B cell (primary cell): ENCODE measurements at regions of chr2 and their contacts with region 1.

Region 1: DNA sequence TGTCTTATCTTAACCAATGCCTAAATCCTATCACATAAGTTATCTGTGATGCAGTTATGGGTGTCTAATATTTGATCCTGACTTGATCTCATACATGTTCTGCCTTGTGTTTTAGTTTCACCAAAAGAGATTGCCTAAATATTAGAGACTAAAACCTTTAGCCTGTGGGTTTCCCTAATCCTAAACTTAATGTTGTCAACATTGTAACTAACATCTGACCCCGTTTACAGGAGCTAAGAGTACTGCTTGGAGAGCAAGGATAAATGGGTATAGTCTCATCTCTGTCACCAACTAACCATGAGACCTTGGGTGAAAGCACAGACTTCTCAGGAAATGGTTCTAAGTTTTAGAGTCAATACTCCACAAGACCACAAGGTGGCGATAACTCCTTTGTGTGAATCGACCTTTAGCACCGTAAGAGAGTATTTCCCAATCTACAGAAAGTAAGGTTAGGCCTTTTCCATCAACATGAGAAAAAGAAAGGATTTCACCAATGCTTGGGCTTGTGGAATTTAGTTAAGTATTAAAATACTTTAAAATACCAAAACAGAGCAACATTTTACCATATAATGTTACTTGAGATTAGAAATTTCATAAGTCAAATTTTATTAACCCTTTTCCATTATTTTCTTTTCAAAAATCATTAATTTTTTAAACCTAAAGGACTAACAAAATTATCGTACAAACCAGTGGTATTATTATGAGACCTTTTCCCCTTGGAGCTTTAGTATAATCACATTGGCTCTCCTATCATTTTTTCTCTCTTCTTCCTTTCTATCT is 60.5 kb downstream of the G6PC2 start:
- DNase-seq: peak; percentile 71
- ATAC-seq: peak; percentile 73
- H3K4me3 ChIP-seq: no peak overlapping the region
- H3K4me3 Mint-ChIP-seq: no peak overlapping the region
- H3K27ac ChIP-seq: no peak overlapping the region
- H3K27ac Mint-ChIP-seq: no peak overlapping the region
- H3K4me1 ChIP-seq: no peaks in the 10 kb centered on the region
- H3K4me1 Mint-ChIP-seq: no peaks in the 10 kb centered on the region
- H3K27me3 ChIP-seq: no peaks in the 10 kb centered on the region
- H3K27me3 Mint-ChIP-seq: no peaks in the 10 kb centered on the region
- CTCF ChIP-seq: peak; percentile 95

Region 2: DNA sequence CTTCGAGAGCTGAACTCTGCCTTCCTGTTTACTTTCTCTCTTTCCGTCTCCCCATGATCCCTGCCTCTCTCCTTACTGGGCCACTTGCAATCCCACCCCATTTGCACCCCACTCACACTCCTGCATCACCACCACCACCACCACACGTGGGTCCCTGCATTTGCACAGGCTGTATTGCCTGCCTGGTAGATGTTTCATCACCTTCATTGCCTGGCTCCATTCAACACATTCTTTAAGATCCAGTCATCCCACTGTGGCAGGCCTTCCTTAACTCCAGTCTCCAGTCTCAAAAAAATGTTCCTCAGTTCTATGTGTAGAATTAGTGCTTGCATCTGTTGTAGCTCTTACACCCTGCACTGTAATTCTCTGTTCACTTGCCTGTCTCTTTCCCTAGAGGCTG is 145.3 kb before region 1 on chr2:
- CTCF ChIA-PET with region 1: no interaction called
- POLR2A ChIA-PET with region 1: no interaction called
- intact Hi-C with region 1: no loop called
- DNase-seq: no peak
- ATAC-seq: no peak
- H3K4me3 ChIP-seq: no peak overlapping the region
- H3K4me3 Mint-ChIP-seq: no peak overlapping the region
- H3K27ac ChIP-seq: no peak overlapping the region
- H3K27ac Mint-ChIP-seq: no peak overlapping the region
- H3K4me1 ChIP-seq: no peaks in the 10 kb centered on the region
- H3K4me1 Mint-ChIP-seq: no peaks in the 10 kb centered on the region
- H3K27me3 ChIP-seq: no peaks in the 10 kb centered on the region
- H3K27me3 Mint-ChIP-seq: no peaks in the 10 kb centered on the region
- CTCF ChIP-seq: no peak

Region 3: GRCh38 chr2:169080250-169081069 is 118.8 kb after region 1 on chr2:
- CTCF ChIA-PET with region 1: no interaction called
- POLR2A ChIA-PET with region 1: no interaction called
- intact Hi-C with region 1: no loop called
- DNase-seq: peak; percentile 55
- ATAC-seq: peak; percentile 92
- H3K4me3 ChIP-seq: no peak overlapping the region
- H3K4me3 Mint-ChIP-seq: no peak overlapping the region
- H3K27ac ChIP-seq: no peak overlapping the region
- H3K27ac Mint-ChIP-seq: peak overlapping the region; percentile 23
- H3K4me1 ChIP-seq: peaks cover 25 to 33% of the 10 kb centered on the region in 2 donors
- H3K4me1 Mint-ChIP-seq: peaks cover 40% of the 10 kb centered on the region
- H3K27me3 ChIP-seq: no peaks in the 10 kb centered on the region
- H3K27me3 Mint-ChIP-seq: no peaks in the 10 kb centered on the region
- CTCF ChIP-seq: no peak

Region 4: DNA sequence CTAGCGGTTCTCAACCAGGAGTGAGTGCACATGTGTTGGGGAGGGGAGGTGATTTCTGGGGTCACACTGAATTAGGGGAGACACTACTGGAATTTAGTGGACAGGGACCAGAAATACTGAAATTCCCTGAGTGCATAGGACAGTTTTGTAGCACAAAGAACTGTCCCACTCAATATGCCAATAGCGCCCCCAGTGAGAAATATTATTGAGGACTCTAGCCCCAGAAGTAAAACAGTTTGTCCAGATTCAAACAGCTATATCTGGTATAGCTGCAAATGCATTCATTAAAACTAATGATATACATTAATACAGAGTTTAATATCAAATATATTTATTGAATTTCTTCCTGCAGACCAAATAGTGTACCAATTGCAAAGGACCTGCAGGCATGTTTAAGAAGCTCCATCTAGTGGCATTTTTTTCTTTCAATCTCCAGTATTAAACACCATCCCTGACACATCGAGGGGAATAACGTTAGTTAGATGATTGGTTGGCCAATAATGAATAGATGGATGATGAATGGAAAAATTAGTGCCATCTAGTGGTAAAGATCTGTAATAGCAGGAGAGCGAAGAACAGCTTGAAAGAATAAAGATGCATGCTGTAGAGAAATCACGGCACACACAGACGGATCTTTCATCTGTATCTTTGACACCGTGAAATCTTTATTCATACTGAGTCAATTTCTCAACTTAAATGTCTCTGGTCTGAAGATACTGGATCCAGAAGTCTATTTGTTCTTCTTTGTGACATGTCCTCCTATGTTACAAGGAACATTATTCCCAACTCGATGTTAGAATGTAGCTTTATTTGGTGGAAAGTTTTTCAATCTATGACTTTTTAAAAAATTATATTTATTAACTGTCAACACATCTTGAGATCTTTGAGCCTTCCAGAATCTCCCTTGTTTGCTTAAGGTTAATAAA is 170.2 kb after region 1 on chr2:
- CTCF ChIA-PET with region 1: interaction called, 14 read pairs
- POLR2A ChIA-PET with region 1: no interaction called
- intact Hi-C with region 1: loop called (anchors 1 kb)
- DNase-seq: peak; percentile 63
- ATAC-seq: peak; percentile 81
- H3K4me3 ChIP-seq: no peak overlapping the region
- H3K4me3 Mint-ChIP-seq: no peak overlapping the region
- H3K27ac ChIP-seq: no peak overlapping the region
- H3K27ac Mint-ChIP-seq: no peak overlapping the region
- H3K4me1 ChIP-seq: no peaks in the 10 kb centered on the region
- H3K4me1 Mint-ChIP-seq: peaks cover 1% of the 10 kb centered on the region
- H3K27me3 ChIP-seq: no peaks in the 10 kb centered on the region
- H3K27me3 Mint-ChIP-seq: no peaks in the 10 kb centered on the region
- CTCF ChIP-seq: peak; percentile 98

Region 5: DNA sequence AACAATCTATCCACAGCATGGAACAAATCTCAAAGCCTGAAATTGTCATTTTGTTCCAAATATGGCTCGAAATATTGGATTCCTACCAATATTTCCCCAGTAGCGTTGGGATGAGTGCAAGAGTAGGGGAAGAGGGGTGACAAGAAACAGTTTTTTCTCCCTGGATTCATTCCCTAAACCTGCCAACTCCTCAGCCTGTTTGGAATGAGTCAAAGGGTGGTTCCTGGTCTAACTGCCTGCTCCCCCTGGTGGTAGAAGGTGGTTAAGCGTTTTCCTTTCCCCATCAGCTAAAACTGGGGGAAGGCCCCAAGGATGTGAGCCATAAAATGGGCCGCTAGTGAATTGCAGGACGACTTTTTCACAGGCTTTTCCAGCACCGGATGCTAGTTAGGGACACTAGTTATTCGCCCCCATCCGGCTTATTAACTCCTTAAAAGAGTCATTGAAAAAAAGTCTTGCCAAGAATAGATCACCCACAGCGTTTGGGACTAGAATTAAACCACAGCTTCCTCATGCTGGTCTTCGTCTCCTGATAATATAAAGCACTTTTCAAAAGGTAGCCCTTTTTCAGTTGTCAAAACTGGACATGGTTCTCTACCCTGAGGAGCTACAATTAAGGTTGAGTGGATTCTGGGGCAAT is 180.2 kb after region 1 on chr2:
- CTCF ChIA-PET with region 1: interaction called, 22 read pairs
- POLR2A ChIA-PET with region 1: no interaction called
- intact Hi-C with region 1: loop called (anchors 2 kb)
- DNase-seq: peak; percentile 60
- ATAC-seq: no peak
- H3K4me3 ChIP-seq: no peak overlapping the region
- H3K4me3 Mint-ChIP-seq: no peak overlapping the region
- H3K27ac ChIP-seq: no peak overlapping the region
- H3K27ac Mint-ChIP-seq: no peak overlapping the region
- H3K4me1 ChIP-seq: no peaks in the 10 kb centered on the region
- H3K4me1 Mint-ChIP-seq: no peaks in the 10 kb centered on the region
- H3K27me3 ChIP-seq: no peaks in the 10 kb centered on the region
- H3K27me3 Mint-ChIP-seq: no peaks in the 10 kb centered on the region
- CTCF ChIP-seq: peak; percentile 87